ENCODE measurements at regions of chr2 and their contacts with region 1.

Region 1: DNA sequence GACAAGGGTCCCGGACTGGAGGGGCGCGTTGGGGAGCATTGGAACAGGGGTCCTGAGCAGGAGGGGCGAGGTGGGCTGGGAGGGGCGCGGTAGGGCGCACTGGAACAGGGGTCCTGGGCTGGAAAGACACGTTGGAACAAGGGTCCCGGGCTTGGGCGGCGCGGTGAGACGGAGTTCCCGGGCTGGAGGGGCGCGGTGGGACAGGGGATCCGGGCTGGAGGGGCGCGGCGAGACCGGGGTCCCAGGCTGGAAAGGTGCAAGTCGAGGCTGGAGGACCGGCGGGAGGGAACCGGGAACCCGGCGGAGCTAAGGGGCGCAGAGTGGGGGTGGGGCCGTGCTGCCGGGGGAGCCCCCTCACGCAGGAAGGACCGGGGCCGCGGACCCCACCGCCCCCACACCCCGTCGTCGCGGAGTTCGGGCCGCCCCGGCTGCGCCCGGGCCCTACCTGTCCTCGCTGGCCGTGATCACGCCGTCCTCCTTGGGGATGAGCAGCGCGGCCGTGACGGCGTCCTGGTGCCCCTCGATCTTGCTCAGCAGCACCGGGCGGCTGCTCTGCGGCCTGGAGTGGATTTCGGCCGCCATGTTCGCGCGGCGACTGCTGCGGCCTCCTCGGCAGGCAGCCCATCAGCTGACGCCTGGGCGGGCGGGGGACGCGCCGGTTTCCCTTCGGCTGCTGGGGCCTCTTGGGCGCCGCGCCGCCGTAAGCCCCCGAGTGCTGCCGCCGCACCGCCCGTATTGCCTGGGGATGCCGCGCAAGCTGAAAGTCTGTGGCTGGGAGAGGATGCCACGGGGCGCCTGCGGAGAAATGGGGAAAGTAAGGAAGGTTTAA is at the start of gene WDFY1:
- DNase-seq: peak; percentile 87
- H3K4me3 ChIP-seq: peak within 1 kb of the TSS; percentile 70 to 79 (median 77)
- H3K27ac ChIP-seq: peak within 1 kb of the TSS; percentile 90
- H3K4me1 ChIP-seq: peaks cover 23% of the 10 kb centered on the region
- H3K27me3 ChIP-seq: no peaks in the 10 kb centered on the region
- CTCF ChIP-seq: no peak
- POLR2A ChIP-seq: peak; percentile 90
- total RNA-seq, gene WDFY1: 66.0 and 68.7 TPM in 2 replicates

Region 2: GRCh38 chr2:223647258-223647952 is 297.5 kb before region 1 on chr2:
- CTCF ChIA-PET with region 1: no interaction called
- POLR2A ChIA-PET with region 1: no interaction called
- dilution Hi-C with region 1: no loop called
- intact Hi-C with region 1: no loop called
- DNase-seq: no peak
- H3K4me3 ChIP-seq: no peak overlapping the region
- H3K27ac ChIP-seq: no peak overlapping the region
- H3K4me1 ChIP-seq: no peaks in the 10 kb centered on the region
- H3K27me3 ChIP-seq: peaks cover 0 to 3% of the 10 kb centered on the region in 2 experiments
- CTCF ChIP-seq: no peak
- POLR2A ChIP-seq: no peak

Region 3: DNA sequence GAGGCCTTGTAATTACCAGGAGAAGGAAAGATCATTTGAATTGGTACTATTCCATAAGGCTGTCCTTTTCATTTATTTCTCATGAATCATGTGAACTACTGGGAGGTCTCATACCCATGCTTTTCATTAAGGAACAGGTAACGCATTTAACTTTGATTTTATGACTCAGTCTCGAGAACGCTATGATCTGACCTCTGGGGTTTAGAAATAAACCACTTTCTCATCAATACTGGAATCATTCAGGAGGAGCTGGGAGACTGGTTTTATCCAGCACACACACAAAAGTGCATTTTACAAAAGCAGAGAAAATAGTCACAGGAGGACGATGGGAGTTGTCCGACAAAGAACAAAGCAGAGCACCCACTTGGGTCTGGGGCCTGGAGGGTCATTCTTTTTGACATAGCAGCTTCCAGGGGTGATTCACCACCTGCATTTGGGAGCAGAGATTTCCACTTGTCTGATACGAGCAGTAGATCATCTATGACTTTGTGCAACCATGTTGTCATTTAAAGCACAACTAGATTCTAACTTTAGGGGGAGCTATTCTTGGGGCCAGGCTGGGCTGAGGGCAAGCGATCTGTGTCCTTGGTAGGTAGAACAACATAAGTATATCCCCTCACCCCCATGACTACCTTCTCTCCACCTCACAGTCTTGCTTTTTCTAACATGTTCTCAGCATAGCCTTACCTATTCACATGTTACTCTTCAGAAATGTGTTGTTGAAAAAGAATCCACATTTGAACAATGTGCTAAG is 246.8 kb before region 1 on chr2:
- CTCF ChIA-PET with region 1: no interaction called
- POLR2A ChIA-PET with region 1: no interaction called
- dilution Hi-C with region 1: no loop called
- intact Hi-C with region 1: loop called (anchors 2 kb)
- DNase-seq: peak; percentile 18
- H3K4me3 ChIP-seq: no peak overlapping the region
- H3K27ac ChIP-seq: peak overlapping the region; percentile 87
- H3K4me1 ChIP-seq: peaks cover 38% of the 10 kb centered on the region
- H3K27me3 ChIP-seq: no peaks in the 10 kb centered on the region
- CTCF ChIP-seq: no peak
- POLR2A ChIP-seq: no peak

Region 4: GRCh38 chr2:223909001-223909741 is 35.7 kb before region 1 on chr2:
- CTCF ChIA-PET with region 1: interaction called, 4 read pairs
- POLR2A ChIA-PET with region 1: no interaction called
- dilution Hi-C with region 1: no loop called
- intact Hi-C with region 1: loop called (anchors 5 kb)
- DNase-seq: peak; percentile 30
- H3K4me3 ChIP-seq: no peak overlapping the region
- H3K27ac ChIP-seq: no peak overlapping the region
- H3K4me1 ChIP-seq: peaks cover 10% of the 10 kb centered on the region
- H3K27me3 ChIP-seq: no peaks in the 10 kb centered on the region
- CTCF ChIP-seq: no peak
- POLR2A ChIP-seq: no peak

Region 5: DNA sequence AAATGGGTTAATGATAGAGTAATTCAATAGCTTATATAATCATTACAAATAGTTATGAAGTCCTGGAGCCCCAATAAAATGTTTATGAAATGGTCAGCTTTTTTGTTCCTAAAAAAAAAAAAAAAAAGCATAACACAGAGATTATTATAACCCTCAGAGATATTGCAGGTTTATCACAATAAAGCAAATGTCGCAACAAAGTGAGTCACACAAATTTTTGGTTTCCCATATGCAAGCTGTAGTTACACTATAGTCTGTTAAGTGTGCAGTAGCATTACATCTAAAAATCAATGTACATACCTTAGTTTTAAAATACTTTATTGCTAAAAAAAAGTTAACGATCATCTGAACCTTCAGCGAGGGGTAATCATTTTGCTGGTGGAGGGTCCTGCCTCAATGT is 19.8 kb before region 1 on chr2:
- CTCF ChIA-PET with region 1: interaction called, 8 read pairs
- POLR2A ChIA-PET with region 1: interaction called, 4 read pairs
- dilution Hi-C with region 1: no loop called
- intact Hi-C with region 1: loop called (anchors 1 kb)
- DNase-seq: no peak
- H3K4me3 ChIP-seq: no peak overlapping the region
- H3K27ac ChIP-seq: no peak overlapping the region
- H3K4me1 ChIP-seq: peaks cover 51% of the 10 kb centered on the region
- H3K27me3 ChIP-seq: no peaks in the 10 kb centered on the region
- CTCF ChIP-seq: no peak
- POLR2A ChIP-seq: no peak

Region 6: GRCh38 chr2:224946895-224947294 is 1002.0 kb after region 1 on chr2:
- CTCF ChIA-PET with region 1: no interaction called
- POLR2A ChIA-PET with region 1: no interaction called
- dilution Hi-C with region 1: no loop called
- intact Hi-C with region 1: loop called (anchors 10 kb)
- DNase-seq: peak; percentile 84
- H3K4me3 ChIP-seq: peak overlapping the region; percentile 13 to 95 (median 93)
- H3K27ac ChIP-seq: peak overlapping the region; percentile 99
- H3K4me1 ChIP-seq: peaks cover 61% of the 10 kb centered on the region
- H3K27me3 ChIP-seq: no peaks in the 10 kb centered on the region
- CTCF ChIP-seq: no peak
- POLR2A ChIP-seq: peak; percentile 71